ENCODE measurements at regions of chr13 and their contacts with region 1.

Region 1: GRCh38 chr13:48769107-48769704 is 115.5 kb downstream of the CYSLTR2 start:
- DNase-seq: peak; percentile 91
- ATAC-seq: peak; percentile 98
- H3K4me3 ChIP-seq: no peak overlapping the region
- H3K27ac ChIP-seq: no peak overlapping the region
- H3K4me1 ChIP-seq: peaks cover 8% of the 10 kb centered on the region
- H3K27me3 ChIP-seq: no peaks in the 10 kb centered on the region
- CTCF ChIP-seq: peak; percentile 100; the same call in 1 of the 2 replicates
- POLR2A ChIP-seq: 0 out of 2 replicates have a peak, but pooled peaks have one; percentile 50
- RAD21 ChIP-seq: peak; percentile 100

Region 2: DNA sequence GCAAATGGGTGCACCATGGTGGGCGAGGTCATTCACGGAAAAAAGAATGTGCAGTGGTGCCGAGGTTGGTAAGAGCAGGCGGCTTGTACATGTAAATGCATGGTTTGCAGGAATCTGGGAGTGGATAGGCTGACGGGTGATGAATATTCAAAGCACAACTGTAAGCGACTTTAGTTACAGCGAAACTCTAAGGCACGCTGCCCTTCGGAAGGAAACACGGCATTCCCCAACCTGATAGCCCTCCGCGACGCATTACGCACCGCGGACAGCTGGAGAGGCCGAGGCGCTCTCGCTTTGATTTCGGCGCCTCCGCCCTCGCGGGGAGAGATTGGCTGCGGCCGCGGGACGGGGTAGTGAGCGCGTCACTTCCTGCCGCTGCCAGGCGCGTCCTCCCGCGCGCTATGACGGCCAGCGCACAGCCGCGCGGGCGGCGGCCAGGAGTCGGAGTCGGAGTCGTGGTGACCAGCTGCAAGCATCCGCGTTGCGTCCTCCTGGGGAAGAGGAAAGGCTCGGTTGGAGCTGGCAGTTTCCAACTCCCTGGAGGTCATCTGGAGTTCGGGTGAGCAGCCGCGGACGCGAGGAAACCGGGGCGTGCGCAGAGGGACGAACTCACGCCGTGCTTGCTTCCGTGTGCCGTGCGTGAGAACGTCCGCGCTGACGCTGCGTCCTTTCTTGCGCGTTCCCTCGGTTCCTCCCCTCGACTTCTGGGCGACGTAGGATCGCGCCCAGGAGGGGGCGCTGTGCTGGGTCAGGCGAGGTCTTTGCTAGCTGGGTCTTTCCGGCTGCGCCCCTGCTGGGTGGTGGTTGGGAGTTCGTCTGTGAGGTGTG is 731.6 kb before region 1 on chr13 and contains the start of gene NUDT15:
- CTCF ChIA-PET with region 1: no interaction called
- POLR2A ChIA-PET with region 1: no interaction called
- dilution Hi-C with region 1: no loop called
- in situ Hi-C with region 1: no loop called
- intact Hi-C with region 1: loop called (anchors 5 kb)
- DNase-seq: peak; percentile 96
- ATAC-seq: peak; percentile 98
- H3K4me3 ChIP-seq: peak within 1 kb of the TSS; percentile 78
- H3K27ac ChIP-seq: peak within 1 kb of the TSS; percentile 91
- H3K4me1 ChIP-seq: peaks cover 2% of the 10 kb centered on the region; the same call in 1 of the 2 replicates
- H3K27me3 ChIP-seq: no peaks in the 10 kb centered on the region
- CTCF ChIP-seq: peak; percentile 99
- POLR2A ChIP-seq: peak; percentile 98
- RAD21 ChIP-seq: peak; percentile 48
- total RNA-seq, gene NUDT15: 13.1 and 26.7 TPM in 2 replicates

Region 3: GRCh38 chr13:48233046-48233907 is 535.9 kb before region 1 on chr13 and contains the start of gene ITM2B:
- CTCF ChIA-PET with region 1: no interaction called
- POLR2A ChIA-PET with region 1: no interaction called
- dilution Hi-C with region 1: no loop called
- in situ Hi-C with region 1: no loop called
- intact Hi-C with region 1: loop called (anchors 10 kb)
- DNase-seq: peak; percentile 65
- ATAC-seq: peak; percentile 95
- H3K4me3 ChIP-seq: peak within 1 kb of the TSS; percentile 83
- H3K27ac ChIP-seq: peak within 1 kb of the TSS; percentile 65
- H3K4me1 ChIP-seq: peaks cover 8% of the 10 kb centered on the region
- H3K27me3 ChIP-seq: peaks cover 6% of the 10 kb centered on the region; the same call in 1 of the 2 replicates
- CTCF ChIP-seq: peak; percentile 36
- POLR2A ChIP-seq: peak; percentile 86
- RAD21 ChIP-seq: no peak
- total RNA-seq, gene ITM2B: 51.1 and 76.9 TPM in 2 replicates

Region 4: DNA sequence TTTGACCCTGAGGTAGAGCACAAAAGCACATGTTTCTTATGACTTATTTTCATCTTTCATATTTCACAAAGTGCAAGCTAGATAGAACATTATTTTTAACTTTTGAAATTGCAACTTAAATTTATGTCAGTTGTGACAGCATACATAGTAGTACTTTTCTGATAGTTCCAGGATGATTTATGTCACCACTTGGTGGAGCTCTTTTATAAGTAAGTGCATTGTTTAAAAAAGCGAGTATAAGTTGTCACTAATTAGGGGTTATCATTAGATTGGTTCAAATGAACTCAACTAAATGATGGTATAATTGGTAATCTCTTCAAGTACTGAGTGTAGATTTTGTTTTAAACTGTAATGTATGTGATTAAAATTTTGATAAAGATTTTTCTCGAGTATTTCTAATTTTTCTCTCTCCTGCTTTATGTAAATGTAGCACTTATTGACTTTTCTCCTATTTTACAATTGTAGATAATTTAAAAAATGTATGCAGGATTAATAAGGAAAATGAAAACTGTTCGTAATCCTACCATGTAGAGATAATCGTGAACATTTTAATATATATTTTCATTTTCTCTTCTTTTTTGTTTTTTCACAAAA is 434.6 kb before region 1 on chr13:
- CTCF ChIA-PET with region 1: interaction called, 4 read pairs
- POLR2A ChIA-PET with region 1: no interaction called
- dilution Hi-C with region 1: no loop called
- in situ Hi-C with region 1: loop called (anchors 10 kb)
- intact Hi-C with region 1: loop called (anchors 1 kb)
- DNase-seq: peak; percentile 45
- ATAC-seq: peak; percentile 62
- H3K4me3 ChIP-seq: no peak overlapping the region
- H3K27ac ChIP-seq: no peak overlapping the region
- H3K4me1 ChIP-seq: peaks cover 4% of the 10 kb centered on the region; the same call in 1 of the 2 replicates
- H3K27me3 ChIP-seq: no peaks in the 10 kb centered on the region
- CTCF ChIP-seq: peak; percentile 66
- POLR2A ChIP-seq: no peak
- RAD21 ChIP-seq: peak; percentile 71

Region 5: DNA sequence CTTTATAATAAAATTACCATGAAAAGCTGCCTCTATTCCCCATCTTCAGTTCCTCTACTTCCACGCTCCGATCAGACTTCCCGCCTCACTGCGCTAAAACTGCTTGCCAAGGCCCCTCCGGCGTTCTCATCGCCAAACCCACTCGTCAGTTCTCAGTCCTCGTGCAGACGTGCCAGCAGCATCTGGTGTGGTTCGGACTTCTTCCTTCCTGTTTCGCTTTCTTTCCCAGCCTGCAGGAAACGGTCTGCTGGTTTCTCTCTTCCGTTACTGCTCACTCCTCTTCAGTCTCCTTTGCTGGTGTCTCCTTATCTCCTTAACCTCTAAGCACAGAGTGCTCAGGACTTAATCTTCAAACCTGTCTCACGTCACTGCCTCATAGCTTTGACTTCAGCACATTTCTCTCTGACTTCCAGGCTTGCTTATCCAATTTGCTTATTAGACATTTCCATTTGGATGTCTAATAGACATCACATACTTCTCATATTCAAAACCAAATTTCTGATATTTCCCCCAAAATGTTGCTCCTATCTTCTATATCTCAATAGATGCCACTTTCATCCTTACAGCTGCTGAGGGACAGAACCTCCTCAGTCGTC is 276.6 kb before region 1 on chr13:
- CTCF ChIA-PET with region 1: no interaction called
- POLR2A ChIA-PET with region 1: no interaction called
- dilution Hi-C with region 1: no loop called
- in situ Hi-C with region 1: no loop called
- intact Hi-C with region 1: no loop called
- DNase-seq: peak; percentile 18
- ATAC-seq: no peak
- H3K4me3 ChIP-seq: peak overlapping the region; percentile 30; the same call in 1 of the 2 replicates
- H3K27ac ChIP-seq: no peak overlapping the region
- H3K4me1 ChIP-seq: no peaks in the 10 kb centered on the region
- H3K27me3 ChIP-seq: no peaks in the 10 kb centered on the region
- CTCF ChIP-seq: no peak
- POLR2A ChIP-seq: no peak
- RAD21 ChIP-seq: no peak

Region 6: DNA sequence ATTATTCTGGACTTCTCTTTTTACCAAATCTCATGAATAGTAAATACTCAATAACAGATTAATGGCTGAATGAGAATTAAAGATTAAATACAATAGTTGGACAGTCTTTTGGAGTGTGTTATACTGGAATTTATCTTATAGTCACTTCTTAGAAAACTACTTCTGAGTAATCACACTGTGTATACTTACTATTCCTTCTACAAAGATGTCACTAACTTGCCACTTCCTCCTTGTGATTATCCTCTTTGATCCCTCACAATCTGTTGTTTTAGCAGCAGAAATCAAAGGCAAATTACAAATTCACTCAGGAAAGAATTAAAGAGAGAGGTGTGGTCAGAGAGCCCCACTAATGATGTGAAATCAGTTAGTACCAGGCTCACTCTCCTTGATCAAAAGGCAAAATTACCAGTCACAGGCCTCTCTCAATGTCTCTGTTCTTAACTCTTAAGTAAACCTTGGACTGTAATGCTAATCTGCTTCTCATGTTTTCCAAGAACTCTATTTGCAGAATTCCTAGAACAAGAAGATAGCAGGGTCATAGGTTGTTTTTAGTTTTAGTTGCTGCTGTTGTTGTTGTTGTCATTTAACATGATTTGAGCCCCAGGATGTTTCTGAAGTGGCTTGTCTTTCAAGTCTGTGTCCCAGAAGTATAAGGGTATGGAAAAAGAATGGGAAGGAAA is 169.2 kb after region 1 on chr13:
- CTCF ChIA-PET with region 1: no interaction called
- POLR2A ChIA-PET with region 1: no interaction called
- dilution Hi-C with region 1: no loop called
- in situ Hi-C with region 1: no loop called
- intact Hi-C with region 1: no loop called
- DNase-seq: no peak
- ATAC-seq: no peak
- H3K4me3 ChIP-seq: no peak overlapping the region
- H3K27ac ChIP-seq: no peak overlapping the region
- H3K4me1 ChIP-seq: no peaks in the 10 kb centered on the region
- H3K27me3 ChIP-seq: no peaks in the 10 kb centered on the region
- CTCF ChIP-seq: no peak
- POLR2A ChIP-seq: no peak
- RAD21 ChIP-seq: no peak

Region 7: GRCh38 chr13:48975856-48976575 is 206.8 kb after region 1 on chr13 and contains the start of gene FNDC3A:
- CTCF ChIA-PET with region 1: no interaction called
- POLR2A ChIA-PET with region 1: no interaction called
- dilution Hi-C with region 1: no loop called
- in situ Hi-C with region 1: no loop called
- intact Hi-C with region 1: loop called (anchors 1 kb)
- DNase-seq: peak; percentile 75
- ATAC-seq: peak; percentile 85
- H3K4me3 ChIP-seq: peak within 1 kb of the TSS; percentile 99
- H3K27ac ChIP-seq: peak within 1 kb of the TSS; percentile 97
- H3K4me1 ChIP-seq: peaks cover 9% of the 10 kb centered on the region; the same call in 1 of the 2 replicates
- H3K27me3 ChIP-seq: no peaks in the 10 kb centered on the region
- CTCF ChIP-seq: no peak
- POLR2A ChIP-seq: peak; percentile 65
- RAD21 ChIP-seq: no peak
- total RNA-seq, gene FNDC3A: 60.4 and 72.8 TPM in 2 replicates

Region 8: GRCh38 chr13:49454388-49455006 is 685.3 kb after region 1 on chr13:
- CTCF ChIA-PET with region 1: no interaction called
- POLR2A ChIA-PET with region 1: no interaction called
- dilution Hi-C with region 1: no loop called
- in situ Hi-C with region 1: no loop called
- intact Hi-C with region 1: no loop called
- DNase-seq: peak; percentile 88
- ATAC-seq: peak; percentile 89
- H3K4me3 ChIP-seq: peak overlapping the region; percentile 2; the same call in 1 of the 2 replicates
- H3K27ac ChIP-seq: peak overlapping the region; percentile 98
- H3K4me1 ChIP-seq: peaks cover 16% of the 10 kb centered on the region
- H3K27me3 ChIP-seq: no peaks in the 10 kb centered on the region
- CTCF ChIP-seq: no peak
- POLR2A ChIP-seq: no peak
- RAD21 ChIP-seq: no peak